ENCODE measurements at regions of chr7 and their contacts with region 1.

Region 1: DNA sequence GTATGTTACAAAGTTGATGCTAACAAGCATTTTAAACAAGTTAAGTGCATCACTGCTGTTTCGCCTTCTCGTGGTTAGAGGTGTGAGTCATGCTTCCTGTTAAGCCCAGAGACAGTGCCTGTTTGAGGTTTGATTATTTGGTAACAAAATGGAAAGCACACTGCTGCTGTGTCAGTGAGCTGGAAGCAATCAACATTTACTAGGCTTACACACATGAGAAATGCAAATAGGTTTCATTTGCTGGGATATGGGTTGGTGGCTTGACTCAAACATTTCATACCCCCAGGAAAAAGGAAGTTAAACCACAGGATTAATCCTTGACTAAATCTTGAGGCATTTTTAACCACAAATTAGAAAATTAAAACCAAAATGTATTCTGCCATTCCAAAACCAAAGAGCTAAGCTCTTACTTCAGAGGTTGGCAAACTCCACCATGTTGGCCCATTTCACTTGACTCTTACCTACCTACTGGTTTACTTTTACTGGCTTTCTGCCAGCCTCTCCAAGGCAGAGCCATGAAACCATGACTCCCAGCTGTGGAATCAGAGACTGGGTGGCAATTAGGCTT is 139.2 kb downstream of the ETV1 start:
- DNase-seq: peak in 1 of 4 donors; percentile 41
- ATAC-seq: peak; percentile 88
- H3K4me3 ChIP-seq: no peak overlapping the region
- H3K27ac ChIP-seq: peak overlapping the region; percentile 10 to 51
- H3K4me1 ChIP-seq: peaks cover 0 to 12% of the 10 kb centered on the region in 2 donors
- H3K27me3 ChIP-seq: no peaks in the 10 kb centered on the region
- CTCF ChIP-seq: no peak

Region 2: DNA sequence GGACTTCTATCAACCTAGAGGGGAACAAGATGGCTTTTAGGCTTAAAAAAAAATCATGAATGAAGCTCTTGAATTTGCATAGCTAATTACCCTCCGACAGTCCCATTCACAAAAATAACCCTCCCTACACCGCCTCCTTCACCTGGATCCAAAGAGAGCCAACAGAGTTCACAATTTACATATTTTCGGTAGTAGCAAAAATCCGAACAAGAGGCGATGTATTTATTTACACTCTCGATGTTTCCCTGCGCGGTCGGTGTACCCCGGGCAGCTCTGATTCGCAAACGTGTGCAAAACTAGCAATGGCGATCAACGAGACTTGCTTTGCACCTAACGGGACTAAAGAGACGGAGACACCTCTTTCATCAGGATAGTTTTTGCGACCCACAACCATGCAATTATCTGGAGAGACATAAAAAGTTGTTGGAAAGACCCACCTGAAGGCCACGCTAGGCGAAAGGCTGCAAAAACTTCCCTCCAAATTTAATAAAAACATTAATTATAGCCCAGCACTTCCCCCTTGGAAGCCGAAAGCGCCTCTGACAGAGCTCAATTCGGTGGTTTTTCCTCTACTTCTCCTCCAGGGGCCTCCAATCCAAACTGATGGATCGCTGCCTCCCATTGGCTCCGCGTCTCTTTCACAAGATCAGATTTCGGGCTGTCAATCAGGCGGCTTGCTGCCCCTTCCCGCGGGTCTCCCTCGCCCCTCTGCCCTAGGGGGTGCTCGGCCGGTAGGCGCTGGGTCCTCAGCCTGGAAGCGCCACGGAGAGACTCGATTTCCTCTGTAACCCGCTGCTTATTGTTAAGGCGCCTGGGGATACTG is 139.1 kb after region 1 on chr7 and contains the start of gene ETV1:
- intact Hi-C with region 1: loop called in 1 of 2 experiments (anchors 5 kb)
- DNase-seq: peak; percentile 75 to 91 (median 80)
- ATAC-seq: peak; percentile 51
- H3K4me3 ChIP-seq: peak within 1 kb of the TSS; percentile 51 to 54
- H3K27ac ChIP-seq: peak within 1 kb of the TSS; percentile 87 to 96
- H3K4me1 ChIP-seq: peaks cover 0 to 7% of the 10 kb centered on the region in 2 donors
- H3K27me3 ChIP-seq: peaks cover 0 to 21% of the 10 kb centered on the region in 2 donors
- CTCF ChIP-seq: no peak
- polyA plus RNA-seq, gene ETV1: 55.3 to 88.4 (median 72.5) TPM